PC-9 (cell line): ENCODE measurements at regions of chr6 and their contacts with region 1.

Region 1: DNA sequence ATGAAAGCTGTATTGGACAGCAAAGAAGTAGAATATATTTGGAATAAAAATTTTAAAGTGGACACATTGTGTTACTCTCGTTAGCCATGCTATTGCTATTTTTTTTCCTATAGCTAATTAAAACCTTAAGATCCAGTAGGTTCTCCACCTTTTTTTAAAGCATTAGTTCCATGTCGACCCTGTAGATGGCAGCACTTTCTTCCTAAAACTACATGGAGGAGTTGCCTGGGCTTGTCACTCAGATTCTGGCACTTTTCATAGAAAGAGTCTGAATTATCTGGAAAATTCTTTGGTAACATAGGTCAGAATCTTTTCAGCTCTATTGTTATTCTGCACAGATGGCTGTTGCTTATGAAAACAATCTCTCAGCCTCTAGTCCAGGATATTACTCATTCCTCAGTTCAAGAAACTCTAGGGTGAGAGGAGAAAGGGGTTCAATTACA is 42.0 kb upstream of the ESR1 start:
- DNase-seq: peak; percentile 45 to 79
- H3K4me3 ChIP-seq: no peak overlapping the region
- H3K27ac ChIP-seq: no peak overlapping the region
- H3K4me1 ChIP-seq: peaks cover 26% of the 10 kb centered on the region
- H3K27me3 ChIP-seq: no peaks in the 10 kb centered on the region
- CTCF ChIP-seq: peak; percentile 85

Region 2: GRCh38 chr6:151675746-151676416 is 89.6 kb before region 1 on chr6:
- CTCF ChIA-PET with region 1: no interaction called
- POLR2A ChIA-PET with region 1: no interaction called
- intact Hi-C with region 1: loop called (anchors 5 kb)
- DNase-seq: peak; percentile 28 to 46
- H3K4me3 ChIP-seq: no peak overlapping the region
- H3K27ac ChIP-seq: no peak overlapping the region
- H3K4me1 ChIP-seq: no peaks in the 10 kb centered on the region
- H3K27me3 ChIP-seq: no peaks in the 10 kb centered on the region
- CTCF ChIP-seq: peak; percentile 91

Region 3: GRCh38 chr6:151900730-151901433 is 135.4 kb after region 1 on chr6:
- CTCF ChIA-PET with region 1: interaction called, 4 read pairs
- POLR2A ChIA-PET with region 1: no interaction called
- intact Hi-C with region 1: loop called (anchors 1 kb)
- DNase-seq: peak; percentile 91 to 100
- H3K4me3 ChIP-seq: peak overlapping the region; percentile 47; the same call in 1 of the 2 replicates
- H3K27ac ChIP-seq: peak overlapping the region; percentile 100
- H3K4me1 ChIP-seq: peaks cover 42% of the 10 kb centered on the region
- H3K27me3 ChIP-seq: no peaks in the 10 kb centered on the region
- CTCF ChIP-seq: no peak; the same call in 1 of the 2 replicates

Region 4: DNA sequence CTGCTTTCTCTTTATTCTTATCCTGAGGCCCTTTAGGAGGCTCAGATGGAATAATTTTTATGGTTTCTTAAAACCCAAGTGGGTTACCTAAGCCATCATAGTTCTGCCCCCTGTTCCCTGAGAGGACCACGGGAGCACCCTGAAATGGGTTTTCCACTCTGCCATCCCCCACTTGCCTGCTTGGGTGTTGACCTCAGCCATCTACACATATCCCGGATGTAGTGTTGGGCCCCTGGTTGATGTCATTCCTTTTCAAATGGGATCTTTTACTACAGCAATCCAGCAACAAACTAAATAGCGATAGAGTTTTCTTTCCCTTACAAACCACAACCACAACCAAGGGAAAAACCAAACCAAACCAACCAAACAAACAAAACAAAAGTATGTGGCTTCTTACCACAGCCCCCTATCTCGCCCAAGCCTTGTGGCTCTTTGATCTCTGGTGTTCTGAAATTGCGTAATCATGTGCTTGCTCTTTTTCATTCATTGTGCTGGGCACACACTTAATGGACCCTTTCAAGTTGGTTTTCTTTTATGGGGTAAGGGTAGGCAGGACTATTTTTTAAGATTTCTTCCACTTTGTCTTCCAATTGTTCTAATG is 196.9 kb after region 1 on chr6:
- CTCF ChIA-PET with region 1: no interaction called
- POLR2A ChIA-PET with region 1: no interaction called
- intact Hi-C with region 1: no loop called
- DNase-seq: no peak
- H3K4me3 ChIP-seq: no peak overlapping the region
- H3K27ac ChIP-seq: no peak overlapping the region
- H3K4me1 ChIP-seq: no peaks in the 10 kb centered on the region
- H3K27me3 ChIP-seq: no peaks in the 10 kb centered on the region
- CTCF ChIP-seq: no peak

Region 5: GRCh38 chr6:152124429-152125074 is 359.1 kb after region 1 on chr6:
- CTCF ChIA-PET with region 1: interaction called, 9 read pairs
- POLR2A ChIA-PET with region 1: no interaction called
- intact Hi-C with region 1: loop called (anchors 1 kb)
- DNase-seq: peak in 1 of 2 experiments; percentile 47
- H3K4me3 ChIP-seq: no peak overlapping the region
- H3K27ac ChIP-seq: no peak overlapping the region
- H3K4me1 ChIP-seq: peaks cover 1% of the 10 kb centered on the region; the same call in 1 of the 2 replicates
- H3K27me3 ChIP-seq: no peaks in the 10 kb centered on the region
- CTCF ChIP-seq: peak; percentile 94

Region 6: DNA sequence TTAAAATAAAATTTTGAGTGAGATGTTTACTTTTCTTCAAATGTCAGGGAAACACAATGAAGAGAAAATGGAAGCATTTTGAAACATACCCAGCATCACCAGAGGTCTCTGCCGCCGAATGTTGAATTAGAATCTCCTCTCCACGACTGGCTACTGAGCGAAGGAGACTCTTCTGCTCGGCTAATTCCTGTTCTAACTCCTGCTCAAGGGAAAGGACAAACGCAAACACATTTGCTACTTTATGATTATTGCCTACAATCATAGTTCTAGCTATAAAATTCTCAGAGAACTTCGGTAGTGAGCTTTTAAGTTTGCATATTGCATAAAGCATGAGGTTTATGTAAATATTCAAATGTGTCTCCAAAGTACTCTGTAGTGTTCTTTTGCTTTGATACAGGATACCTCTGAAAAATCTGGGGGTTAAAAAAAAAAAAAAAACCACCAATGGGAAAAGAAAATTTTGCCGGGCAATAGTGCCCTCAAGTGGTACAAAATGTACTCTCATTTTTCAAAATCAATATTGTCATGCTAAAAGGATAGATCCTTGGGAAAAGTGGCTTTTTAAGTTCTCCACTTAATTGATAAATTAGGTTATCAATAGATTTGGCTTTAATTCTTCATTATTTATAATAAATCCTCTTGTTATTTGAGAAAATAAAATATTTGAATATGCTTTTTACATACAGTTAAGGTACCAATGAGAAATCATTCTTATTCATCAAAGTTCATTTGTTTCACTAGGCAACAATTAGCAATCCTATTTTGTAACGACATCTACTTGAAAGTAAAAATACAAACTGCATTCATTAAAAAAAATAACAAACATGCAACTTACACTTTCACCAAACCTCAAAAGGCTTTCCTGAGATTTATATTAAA is 502.7 kb after region 1 on chr6:
- CTCF ChIA-PET with region 1: no interaction called
- POLR2A ChIA-PET with region 1: no interaction called
- intact Hi-C with region 1: loop called (anchors 1 kb)
- DNase-seq: peak in 1 of 2 experiments; percentile 12
- H3K4me3 ChIP-seq: no peak overlapping the region
- H3K27ac ChIP-seq: no peak overlapping the region
- H3K4me1 ChIP-seq: peaks cover 29% of the 10 kb centered on the region
- H3K27me3 ChIP-seq: no peaks in the 10 kb centered on the region
- CTCF ChIP-seq: peak; percentile 81